Posterior vena cava (tissue), 2 donors: ENCODE measurements at regions of chr2 and their contacts with region 1.

Region 1: DNA sequence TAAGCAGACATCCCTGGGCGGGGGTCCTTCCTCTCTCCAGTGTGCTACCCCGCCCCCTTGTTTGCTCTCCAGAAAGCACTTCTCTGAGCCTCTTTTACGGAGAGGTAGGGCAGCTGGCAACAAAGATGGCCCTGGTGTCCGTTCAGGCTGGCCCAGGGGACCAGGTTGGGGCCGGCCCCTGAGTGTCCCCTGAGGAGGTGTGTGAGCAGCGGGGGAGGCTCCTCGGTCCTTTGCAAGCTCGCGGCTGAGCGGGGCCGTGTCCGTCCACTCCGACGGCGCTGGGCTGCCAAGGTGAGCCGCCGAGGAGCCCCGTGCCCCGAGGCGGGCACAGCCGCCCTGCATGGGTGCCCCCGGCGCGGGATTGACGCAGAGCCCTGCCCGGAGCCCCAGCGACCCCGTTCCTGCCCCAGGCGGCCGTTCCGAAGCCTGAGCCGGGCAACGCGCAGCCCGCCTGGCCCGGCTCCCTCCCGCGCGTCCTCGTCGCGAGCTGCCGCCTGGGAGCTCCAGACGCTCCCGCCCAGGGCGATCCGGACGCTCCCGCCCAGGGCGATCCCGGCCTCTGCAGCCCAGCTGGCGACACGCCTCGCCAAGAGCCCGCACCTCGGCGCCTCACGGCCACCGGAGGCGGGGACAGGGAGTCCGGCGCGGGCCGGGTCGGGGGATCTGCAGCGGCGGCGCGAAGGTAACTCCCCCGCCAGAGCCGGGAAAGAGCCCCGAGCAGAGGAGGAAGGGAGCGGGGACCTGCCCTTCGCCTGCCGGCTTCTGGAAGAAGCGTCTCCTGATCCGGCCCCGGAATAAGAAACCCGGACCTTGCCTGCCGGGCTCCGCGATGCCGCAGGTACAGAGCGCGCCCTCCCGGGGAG is at the start of gene PROKR1:
- DNase-seq: peak; percentile 81
- total RNA-seq, gene PROKR1: 0.05 TPM in 1 of 2 donors, not detected in the other

Region 2: GRCh38 chr2:70002241-70002899 is 1359.1 kb after region 1 on chr2:
- intact Hi-C with region 1: loop called in 1 of 2 experiments (anchors 5 kb)
- DNase-seq: no peak